CD4-positive, alpha-beta T cell (primary cell): ENCODE measurements at regions of chr11 and their contacts with region 1.

Region 1: GRCh38 chr11:74948898-74949747 is at the starts of genes SPCS2 and XRRA1:
- DNase-seq: peak; percentile 94 to 99 (median 97)
- ATAC-seq: peak; percentile 96
- H3K4me3 ChIP-seq: peak within 1 kb of the TSS; percentile 85
- H3K4me3 Mint-ChIP-seq: peak within 1 kb of the TSS; percentile 96
- H3K27ac ChIP-seq: peak within 1 kb of the TSS; percentile 71 to 76
- H3K27ac Mint-ChIP-seq: peak within 1 kb of the TSS; percentile 90
- H3K4me1 ChIP-seq: peaks cover 35% of the 10 kb centered on the region
- H3K4me1 Mint-ChIP-seq: peaks cover 65% of the 10 kb centered on the region
- H3K27me3 ChIP-seq: no peaks in the 10 kb centered on the region
- H3K27me3 Mint-ChIP-seq: no peaks in the 10 kb centered on the region
- CTCF ChIP-seq: no peak
- total RNA-seq, gene SPCS2: 36.5 to 42.9 TPM
- total RNA-seq, gene XRRA1: 12.2 to 12.5 TPM

Region 2: GRCh38 chr11:74492974-74493790 is 455.9 kb before region 1 on chr11 and contains the start of gene LIPT2:
- CTCF ChIA-PET with region 1: no interaction called
- POLR2A ChIA-PET with region 1: interaction called, 8 read pairs
- intact Hi-C with region 1: loop called in 1 of 2 experiments (anchors 2 kb)
- DNase-seq: peak; percentile 94 to 99 (median 98)
- ATAC-seq: peak; percentile 95
- H3K4me3 ChIP-seq: peak within 1 kb of the TSS; percentile 66
- H3K4me3 Mint-ChIP-seq: peak within 1 kb of the TSS; percentile 91
- H3K27ac ChIP-seq: peak within 1 kb of the TSS; percentile 61 to 94
- H3K27ac Mint-ChIP-seq: peak within 1 kb of the TSS; percentile 86
- H3K4me1 ChIP-seq: peaks cover 12% of the 10 kb centered on the region
- H3K4me1 Mint-ChIP-seq: peaks cover 41% of the 10 kb centered on the region
- H3K27me3 ChIP-seq: no peaks in the 10 kb centered on the region
- H3K27me3 Mint-ChIP-seq: no peaks in the 10 kb centered on the region
- CTCF ChIP-seq: no peak
- total RNA-seq, gene LIPT2: 10.7 to 10.9 TPM

Region 3: DNA sequence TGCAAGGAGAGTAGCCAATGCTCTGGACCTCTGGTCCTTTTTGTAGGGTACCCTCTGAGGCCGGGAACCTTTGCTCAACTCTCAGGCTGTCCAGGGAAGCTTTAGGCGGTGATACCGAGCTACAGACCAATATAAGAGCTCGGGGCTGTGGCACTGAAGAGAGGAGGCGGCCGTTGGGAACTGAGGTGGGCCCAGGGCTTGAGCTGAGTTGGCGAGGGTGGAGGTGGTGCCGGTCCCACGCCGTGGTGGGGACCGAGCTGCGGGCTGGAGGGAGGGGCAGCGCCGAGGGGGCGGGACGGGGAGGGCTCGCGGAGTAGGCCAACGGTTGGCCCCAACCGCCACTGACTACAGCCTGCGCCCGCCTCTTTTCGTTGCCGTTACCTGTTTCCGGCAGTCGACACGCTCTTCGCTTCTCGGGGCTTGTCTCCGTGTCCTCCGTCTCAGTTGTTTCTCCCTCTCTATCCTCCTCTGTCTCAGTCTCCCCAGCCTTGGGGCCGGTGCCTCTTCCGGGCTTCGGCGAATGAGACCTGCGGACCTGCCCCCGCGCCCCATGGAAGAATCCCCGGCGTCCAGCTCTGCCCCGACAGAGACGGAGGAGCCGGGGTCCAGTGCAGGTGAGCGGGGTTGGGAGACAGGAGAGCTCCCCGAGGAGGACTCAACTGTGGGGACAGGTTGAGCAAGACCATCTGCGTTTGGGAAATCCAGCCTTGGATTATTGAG is 39.6 kb after region 1 on chr11 and contains the start of gene NEU3:
- CTCF ChIA-PET with region 1: no interaction called
- POLR2A ChIA-PET with region 1: interaction called, 22 read pairs
- intact Hi-C with region 1: loop called (anchors 2 to 5 kb)
- DNase-seq: peak; percentile 71 to 91 (median 80)
- ATAC-seq: peak; percentile 98
- H3K4me3 ChIP-seq: peak within 1 kb of the TSS; percentile 96
- H3K4me3 Mint-ChIP-seq: peak within 1 kb of the TSS; percentile 93
- H3K27ac ChIP-seq: peak within 1 kb of the TSS; percentile 66 to 78
- H3K27ac Mint-ChIP-seq: peak within 1 kb of the TSS; percentile 79
- H3K4me1 ChIP-seq: peaks cover 18% of the 10 kb centered on the region
- H3K4me1 Mint-ChIP-seq: peaks cover 38% of the 10 kb centered on the region
- H3K27me3 ChIP-seq: no peaks in the 10 kb centered on the region
- H3K27me3 Mint-ChIP-seq: no peaks in the 10 kb centered on the region
- CTCF ChIP-seq: no peak
- total RNA-seq, gene NEU3: 9.7 to 10.6 TPM

Region 4: DNA sequence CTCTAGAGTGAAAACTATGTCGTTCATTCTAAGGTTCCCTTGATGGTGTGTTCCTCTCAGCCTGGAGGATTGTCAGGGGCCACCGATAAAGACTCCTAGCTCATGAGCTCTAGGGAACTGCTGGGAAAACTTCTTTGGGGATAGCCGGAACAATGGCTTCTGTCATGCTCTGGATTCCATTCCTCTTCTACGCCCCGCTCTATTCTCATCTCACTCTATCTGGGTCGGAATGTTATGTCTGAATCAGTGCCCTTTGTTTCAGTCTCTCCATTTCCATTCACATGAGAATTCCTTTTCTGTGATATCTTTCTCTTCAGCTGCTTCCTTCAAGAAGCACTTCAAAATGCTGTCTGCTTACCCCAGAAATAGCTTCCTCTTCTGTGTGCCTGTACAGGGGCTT is 184.9 kb after region 1 on chr11:
- CTCF ChIA-PET with region 1: no interaction called
- POLR2A ChIA-PET with region 1: no interaction called
- intact Hi-C with region 1: no loop called
- DNase-seq: no peak
- ATAC-seq: no peak
- H3K4me3 ChIP-seq: no peak overlapping the region
- H3K4me3 Mint-ChIP-seq: no peak overlapping the region
- H3K27ac ChIP-seq: no peak overlapping the region
- H3K27ac Mint-ChIP-seq: no peak overlapping the region
- H3K4me1 ChIP-seq: no peaks in the 10 kb centered on the region
- H3K4me1 Mint-ChIP-seq: no peaks in the 10 kb centered on the region
- H3K27me3 ChIP-seq: peaks cover 0 to 5% of the 10 kb centered on the region in 2 experiments
- H3K27me3 Mint-ChIP-seq: peaks cover 33% of the 10 kb centered on the region
- CTCF ChIP-seq: no peak